ENCODE measurements at regions of chr2 and their contacts with region 1.

Region 1: DNA sequence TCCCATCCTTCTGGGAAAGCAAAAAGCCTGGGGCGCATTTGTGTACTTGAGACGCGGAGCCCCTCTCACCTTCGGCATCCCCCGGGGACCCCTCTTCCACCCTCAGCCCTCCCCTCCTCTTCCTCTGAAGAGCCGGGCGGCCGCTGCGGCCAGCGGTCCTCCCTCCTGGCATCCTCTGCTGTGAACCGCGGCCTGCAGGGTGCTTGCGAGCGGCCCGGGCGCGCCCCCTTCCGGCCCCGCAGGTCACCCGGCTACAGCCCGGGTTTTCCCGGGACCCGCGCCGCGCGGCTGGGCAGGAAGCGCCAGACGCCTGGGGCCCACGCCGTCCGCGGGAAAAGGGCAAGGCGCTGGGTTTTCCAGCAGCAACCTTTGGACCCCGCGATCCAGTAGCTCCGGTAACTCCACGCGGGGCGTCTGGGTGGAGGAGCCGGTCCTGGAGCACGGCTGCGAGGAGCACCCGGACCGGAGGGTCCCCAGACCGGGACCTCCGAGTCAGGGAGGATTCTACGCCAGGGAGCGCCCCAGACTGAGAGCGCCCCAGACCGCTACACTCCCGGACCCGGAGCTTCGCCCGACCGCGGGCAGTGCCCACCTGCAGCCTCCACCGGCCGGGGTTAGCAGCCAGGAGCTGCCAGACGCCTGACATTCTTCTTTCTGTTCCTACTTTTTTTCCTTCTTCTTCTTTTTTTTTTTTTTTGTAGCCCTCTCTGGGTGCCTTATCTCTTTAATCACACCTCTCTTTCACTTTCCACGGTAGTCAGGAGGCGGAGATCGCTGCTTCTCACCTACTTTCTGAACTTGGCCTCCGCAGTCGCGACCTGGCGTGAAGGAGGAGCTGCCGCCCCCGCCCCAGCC is at the start of gene IL18R1:
- DNase-seq: peak; percentile 65
- H3K4me3 ChIP-seq: peak within 1 kb of the TSS; percentile 84 to 88 (median 85)
- H3K27ac ChIP-seq: peak within 1 kb of the TSS; percentile 58
- H3K4me1 ChIP-seq: peaks cover 8% of the 10 kb centered on the region
- H3K27me3 ChIP-seq: no peaks in the 10 kb centered on the region
- CTCF ChIP-seq: peak; percentile 55 to 85
- total RNA-seq, gene IL18R1: 1.2 to 3.9 TPM

Region 2: DNA sequence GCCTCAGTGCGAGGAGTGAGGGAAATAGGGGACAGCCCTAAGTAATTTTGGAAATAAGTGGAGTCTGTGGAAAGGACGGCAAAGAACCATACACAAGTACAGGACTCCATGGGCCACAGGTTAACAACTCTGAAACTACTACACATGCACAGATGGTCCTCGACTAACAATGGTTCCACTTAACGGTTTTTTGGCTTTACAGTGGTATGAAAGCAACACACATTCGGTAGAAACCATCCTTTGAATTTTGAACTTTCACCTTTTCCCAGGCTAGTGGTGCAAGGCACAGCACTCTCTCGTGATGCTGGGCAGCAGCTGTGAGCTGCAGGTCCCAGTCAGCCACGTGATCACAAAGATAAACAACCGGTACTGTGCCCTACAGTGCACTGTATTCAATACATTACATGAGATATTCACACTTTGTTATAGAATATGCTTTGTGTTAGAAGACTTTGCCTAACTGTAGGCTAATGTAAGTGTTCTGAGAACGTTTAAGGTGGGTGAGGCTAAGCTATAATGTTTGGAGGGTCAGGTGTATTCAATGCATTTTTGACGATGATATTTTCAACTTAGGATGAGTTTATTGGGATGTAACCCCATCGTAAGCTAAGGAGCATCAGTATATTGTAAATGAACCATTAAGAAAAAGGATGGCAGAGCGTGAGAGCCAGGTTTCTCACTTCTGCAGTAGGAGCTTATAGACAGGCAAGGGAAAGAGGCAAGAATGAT is 1249.1 kb before region 1 on chr2:
- CTCF ChIA-PET with region 1: no interaction called
- dilution Hi-C with region 1: no loop called
- in situ Hi-C with region 1: no loop called
- intact Hi-C with region 1: no loop called
- DNase-seq: no peak
- H3K4me3 ChIP-seq: no peak overlapping the region
- H3K27ac ChIP-seq: no peak overlapping the region
- H3K4me1 ChIP-seq: peaks cover 7% of the 10 kb centered on the region
- H3K27me3 ChIP-seq: no peaks in the 10 kb centered on the region
- CTCF ChIP-seq: no peak

Region 3: GRCh38 chr2:102166189-102166845 is 189.4 kb before region 1 on chr2:
- CTCF ChIA-PET with region 1: no interaction called
- dilution Hi-C with region 1: no loop called
- in situ Hi-C with region 1: no loop called
- intact Hi-C with region 1: loop called (anchors 5 kb)
- DNase-seq: peak; percentile 66
- H3K4me3 ChIP-seq: no peak overlapping the region
- H3K27ac ChIP-seq: peak overlapping the region; percentile 17
- H3K4me1 ChIP-seq: peaks cover 4% of the 10 kb centered on the region
- H3K27me3 ChIP-seq: no peaks in the 10 kb centered on the region
- CTCF ChIP-seq: peak; percentile 60 to 76

Region 4: GRCh38 chr2:102187496-102188150 is 168.1 kb before region 1 on chr2:
- CTCF ChIA-PET with region 1: no interaction called
- dilution Hi-C with region 1: no loop called
- in situ Hi-C with region 1: no loop called
- intact Hi-C with region 1: loop called (anchors 5 kb)
- DNase-seq: peak; percentile 16
- H3K4me3 ChIP-seq: peak overlapping the region; percentile 13 to 44 (median 41)
- H3K27ac ChIP-seq: peak overlapping the region; percentile 14
- H3K4me1 ChIP-seq: peaks cover 28% of the 10 kb centered on the region
- H3K27me3 ChIP-seq: no peaks in the 10 kb centered on the region
- CTCF ChIP-seq: no peak

Region 5: GRCh38 chr2:102251042-102251848 is 104.5 kb before region 1 on chr2:
- CTCF ChIA-PET with region 1: no interaction called
- dilution Hi-C with region 1: no loop called
- in situ Hi-C with region 1: loop called in 1 of 2 experiments (anchors 10 kb)
- intact Hi-C with region 1: loop called (anchors 1 kb)
- DNase-seq: no peak
- H3K4me3 ChIP-seq: peak overlapping the region; percentile 5 to 43 (median 36)
- H3K27ac ChIP-seq: no peak overlapping the region
- H3K4me1 ChIP-seq: peaks cover 9% of the 10 kb centered on the region
- H3K27me3 ChIP-seq: no peaks in the 10 kb centered on the region
- CTCF ChIP-seq: peak; percentile 39 to 62

Region 6: DNA sequence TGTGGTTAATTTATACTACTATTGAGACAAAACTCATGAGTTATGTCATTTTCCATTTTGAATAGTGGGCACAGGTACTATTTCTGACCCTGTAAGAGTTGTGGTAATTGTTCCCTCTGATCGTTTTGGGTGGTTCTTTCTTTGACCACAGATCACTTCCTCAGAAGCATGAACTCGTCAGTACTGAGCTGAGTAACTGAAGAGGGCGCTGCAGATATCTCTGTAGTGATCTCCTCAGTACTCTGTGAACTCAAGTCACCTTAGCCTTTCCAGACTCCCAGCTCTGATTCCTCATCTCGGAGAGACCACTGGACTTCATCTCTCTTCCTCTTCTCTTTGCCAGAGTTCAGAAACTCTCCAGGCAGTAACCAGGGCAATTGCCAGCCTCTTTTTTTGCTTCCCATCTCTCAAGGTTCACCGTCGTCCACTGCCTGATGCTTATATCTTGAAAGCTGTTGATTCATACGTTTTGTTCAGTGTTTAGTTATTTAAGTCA is 53.8 kb before region 1 on chr2:
- CTCF ChIA-PET with region 1: no interaction called
- dilution Hi-C with region 1: no loop called
- in situ Hi-C with region 1: no loop called
- intact Hi-C with region 1: loop called (anchors 1 kb)
- DNase-seq: peak; percentile 29
- H3K4me3 ChIP-seq: no peak overlapping the region
- H3K27ac ChIP-seq: no peak overlapping the region
- H3K4me1 ChIP-seq: no peaks in the 10 kb centered on the region
- H3K27me3 ChIP-seq: peaks cover 4% of the 10 kb centered on the region
- CTCF ChIP-seq: peak; percentile 36 to 65

Region 7: GRCh38 chr2:102703748-102704147 is 348.0 kb after region 1 on chr2:
- CTCF ChIA-PET with region 1: no interaction called
- dilution Hi-C with region 1: no loop called
- in situ Hi-C with region 1: no loop called
- intact Hi-C with region 1: loop called (anchors 5 kb)
- DNase-seq: peak; percentile 50
- H3K4me3 ChIP-seq: no peak overlapping the region
- H3K27ac ChIP-seq: no peak overlapping the region
- H3K4me1 ChIP-seq: peaks cover under 1% of the 10 kb centered on the region
- H3K27me3 ChIP-seq: no peaks in the 10 kb centered on the region
- CTCF ChIP-seq: peak; percentile 55 to 70

Measured in mammary epithelial cell (primary cell).